Activated CD4-positive, alpha-beta T cell treated with anti-CD3 and anti-CD28 coated beads for 36 hours (primary cell): ENCODE measurements at regions of chr12 and their contacts with region 1.

Region 1: GRCh38 chr12:75933101-75933500 is 98.5 kb downstream of the PHLDA1 start:
- DNase-seq: no peak
- ATAC-seq: no peak
- H3K4me3 Mint-ChIP-seq: no peak overlapping the region
- H3K27ac Mint-ChIP-seq: peak overlapping the region; percentile 3
- H3K4me1 Mint-ChIP-seq: peaks cover 26% of the 10 kb centered on the region
- H3K27me3 Mint-ChIP-seq: peaks cover 17% of the 10 kb centered on the region

Region 2: DNA sequence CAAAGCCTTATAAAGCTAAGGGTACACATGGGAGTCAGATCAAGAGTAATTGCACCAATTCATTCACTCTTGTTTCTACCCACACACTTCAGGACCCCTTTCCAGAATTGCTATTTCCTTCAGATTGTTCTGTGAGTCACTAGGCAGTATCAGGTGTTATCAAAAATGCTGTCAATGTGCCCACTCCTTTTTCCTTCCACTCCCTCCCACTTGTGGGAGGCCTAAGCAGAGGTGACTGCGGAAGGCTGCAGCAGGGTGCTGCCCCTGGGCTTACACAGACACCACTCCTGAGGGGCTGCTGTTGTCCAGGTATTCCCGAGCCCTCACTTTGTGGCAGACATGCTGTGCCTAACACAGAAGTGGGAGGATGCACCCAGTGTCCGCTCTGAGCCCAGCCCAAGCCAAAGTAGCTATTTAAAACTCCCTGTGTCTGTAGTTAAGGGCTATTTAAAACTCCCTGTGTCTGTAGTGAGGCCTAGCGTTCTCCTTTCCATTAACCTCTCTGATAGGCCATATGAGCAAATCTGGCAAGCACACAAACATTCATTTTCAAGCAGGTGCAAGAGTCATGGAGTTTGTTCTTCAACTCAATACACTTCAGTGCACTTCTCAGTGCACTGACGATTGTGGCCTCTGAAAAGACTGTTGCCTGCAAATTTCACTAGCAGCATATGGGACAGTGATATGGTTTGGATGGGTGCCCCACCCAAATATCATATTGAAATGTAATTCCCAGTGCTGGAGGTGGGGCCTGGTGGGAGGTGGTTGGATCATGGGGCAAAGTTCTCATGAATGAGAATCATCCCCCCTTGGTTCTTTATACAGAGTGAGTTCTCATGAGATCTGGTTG is 19.4 kb before region 1 on chr12:
- CTCF ChIA-PET with region 1: interaction called, 4 read pairs
- POLR2A ChIA-PET with region 1: interaction called, 4 read pairs
- intact Hi-C with region 1: loop called (anchors 1 kb)
- DNase-seq: peak; percentile 74
- ATAC-seq: peak; percentile 94
- H3K4me3 Mint-ChIP-seq: no peak overlapping the region
- H3K27ac Mint-ChIP-seq: no peak overlapping the region
- H3K4me1 Mint-ChIP-seq: peaks cover 21% of the 10 kb centered on the region
- H3K27me3 Mint-ChIP-seq: peaks cover 1% of the 10 kb centered on the region

Region 3: GRCh38 chr12:75964150-75964549 is 31.0 kb after region 1 on chr12:
- CTCF ChIA-PET with region 1: no interaction called
- POLR2A ChIA-PET with region 1: interaction called, 18 read pairs
- intact Hi-C with region 1: no loop called
- DNase-seq: no peak
- ATAC-seq: peak; percentile 39
- H3K4me3 Mint-ChIP-seq: no peak overlapping the region
- H3K27ac Mint-ChIP-seq: no peak overlapping the region
- H3K4me1 Mint-ChIP-seq: peaks cover 23% of the 10 kb centered on the region
- H3K27me3 Mint-ChIP-seq: peaks cover 1% of the 10 kb centered on the region

Region 4: DNA sequence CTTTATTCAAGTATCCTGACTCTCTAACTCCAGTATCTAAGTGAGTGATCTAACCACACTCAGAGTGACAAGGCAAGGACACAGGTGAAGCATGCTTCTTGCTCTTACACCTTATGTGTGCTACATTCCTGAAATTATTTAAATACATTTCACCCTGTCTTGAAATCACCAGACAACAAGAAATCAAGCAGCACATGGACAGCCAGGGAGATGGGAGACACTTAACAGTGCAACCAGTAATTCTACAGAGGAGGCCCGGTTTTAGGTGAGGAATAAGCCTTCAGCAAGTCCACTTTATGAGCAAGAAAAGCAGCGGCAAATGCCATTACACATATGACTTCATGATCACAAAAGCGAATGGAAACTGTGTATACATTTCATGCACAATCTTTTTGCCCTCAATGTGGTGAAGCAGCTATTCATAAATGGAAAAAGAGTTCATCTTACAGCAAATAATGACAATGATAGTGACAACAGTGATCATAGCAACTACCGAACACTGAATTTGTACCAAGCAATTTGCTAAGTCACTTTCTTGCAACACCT is 61.2 kb after region 1 on chr12:
- CTCF ChIA-PET with region 1: no interaction called
- POLR2A ChIA-PET with region 1: no interaction called
- intact Hi-C with region 1: loop called in 1 of 2 experiments (anchors 1 kb)
- DNase-seq: peak; percentile 53
- ATAC-seq: peak; percentile 86
- H3K4me3 Mint-ChIP-seq: no peak overlapping the region
- H3K27ac Mint-ChIP-seq: peak overlapping the region; percentile 34
- H3K4me1 Mint-ChIP-seq: peaks cover 26% of the 10 kb centered on the region
- H3K27me3 Mint-ChIP-seq: peaks cover 7% of the 10 kb centered on the region

Region 5: DNA sequence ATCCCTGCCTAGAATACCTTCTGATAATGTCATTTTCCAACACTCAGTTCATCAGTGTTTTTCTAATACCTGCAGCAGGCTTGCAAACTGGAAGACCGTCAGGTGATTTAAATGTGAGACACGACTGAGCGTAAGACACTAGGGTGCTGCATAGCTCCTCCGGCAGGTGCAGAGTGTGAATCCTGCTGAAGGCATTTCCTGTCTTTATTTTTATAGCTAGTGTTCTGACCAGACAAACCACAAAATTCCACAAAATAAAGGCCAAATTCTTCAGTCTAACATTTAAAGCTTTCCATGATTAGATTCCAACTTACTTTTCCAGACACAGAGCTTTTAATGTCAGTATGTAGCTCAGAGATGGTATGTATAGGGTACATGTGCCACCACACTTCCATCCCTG is 344.4 kb after region 1 on chr12:
- CTCF ChIA-PET with region 1: no interaction called
- POLR2A ChIA-PET with region 1: no interaction called
- intact Hi-C with region 1: loop called in 1 of 2 experiments (anchors 2 kb)
- DNase-seq: no peak
- ATAC-seq: no peak
- H3K4me3 Mint-ChIP-seq: no peak overlapping the region
- H3K27ac Mint-ChIP-seq: no peak overlapping the region
- H3K4me1 Mint-ChIP-seq: peaks cover 14% of the 10 kb centered on the region
- H3K27me3 Mint-ChIP-seq: peaks cover 33% of the 10 kb centered on the region